ENCODE measurements at regions of chr10 and their contacts with region 1.

Region 1: GRCh38 chr10:73163096-73163495 is 4.7 kb downstream of the ECD start:
- DNase-seq: no peak
- ATAC-seq: no peak

Region 2: GRCh38 chr10:72913287-72913686 is 249.8 kb before region 1 on chr10:
- intact Hi-C with region 1: no loop called
- DNase-seq: no peak
- ATAC-seq: no peak

Region 3: GRCh38 chr10:73096449-73097304 is 66.4 kb before region 1 on chr10 and contains the start of gene P4HA1:
- intact Hi-C with region 1: loop called (anchors 5 kb)
- DNase-seq: peak; percentile 100
- ATAC-seq: peak; percentile 97
- total RNA-seq, gene P4HA1: 79.2 TPM

Region 4: DNA sequence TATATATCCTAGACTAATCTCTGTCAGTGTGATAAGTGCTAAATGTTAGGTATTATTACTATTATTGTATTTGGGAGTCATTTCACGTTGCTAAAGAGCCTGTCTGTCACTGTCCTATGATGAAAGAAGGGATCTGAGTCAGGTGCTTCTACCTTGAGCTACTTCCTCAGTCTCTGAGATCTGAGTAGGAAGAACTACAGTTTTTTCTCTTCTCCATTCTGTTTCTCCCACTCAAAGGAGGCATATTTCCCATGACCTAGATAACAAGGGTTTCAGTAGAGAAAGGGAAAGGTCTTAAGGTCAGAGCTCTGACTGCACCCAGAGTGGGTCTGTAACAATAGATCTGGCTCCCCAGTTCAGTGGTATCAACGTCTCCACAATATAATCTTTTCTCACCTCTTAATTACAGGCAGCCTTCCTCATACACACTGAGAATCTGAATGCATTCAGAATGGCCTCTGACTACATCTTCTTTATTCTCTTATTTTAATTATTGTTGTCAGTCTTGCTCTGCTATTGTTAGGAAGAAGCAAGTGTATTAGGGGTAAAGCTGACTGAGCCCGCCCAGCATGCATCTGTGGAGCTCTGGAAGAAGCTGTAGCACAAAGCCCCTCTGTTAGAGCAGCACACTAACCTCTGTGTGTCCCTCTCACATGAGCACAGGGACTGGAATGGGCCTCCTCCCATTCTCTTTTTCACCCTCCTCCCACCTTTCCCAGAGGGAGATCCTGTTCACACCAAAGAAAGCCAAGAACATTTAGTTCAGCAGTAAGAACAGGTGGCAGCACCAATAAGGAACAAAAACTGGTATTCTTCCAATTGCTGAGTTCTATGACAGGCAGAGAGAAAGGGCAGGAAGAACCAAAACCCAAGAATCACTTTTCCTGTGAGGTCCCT is 390.0 kb after region 1 on chr10:
- intact Hi-C with region 1: no loop called
- DNase-seq: no peak
- ATAC-seq: peak; percentile 84